ENCODE measurements at regions of chr3 and their contacts with region 1.

Region 1: DNA sequence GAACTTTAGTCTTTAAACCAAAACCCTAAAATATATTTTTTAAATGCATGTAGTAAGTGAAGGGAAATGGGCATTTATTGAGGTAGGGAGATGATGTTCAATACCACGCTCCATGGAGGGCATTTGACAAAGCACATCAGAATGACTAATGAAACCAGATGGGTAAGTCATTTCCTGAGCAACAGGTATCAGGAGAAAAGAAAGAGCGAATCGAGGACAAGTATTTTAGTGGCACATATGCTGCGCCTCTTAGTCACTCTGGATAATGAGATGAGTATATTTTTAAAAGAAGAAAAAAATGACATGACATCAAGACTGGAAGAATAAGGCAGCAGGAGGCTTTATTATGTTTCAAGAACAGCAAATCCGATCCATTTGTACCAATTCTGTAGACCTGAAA is 129.0 kb upstream of the ARHGEF3 start:
- DNase-seq: no peak
- H3K4me3 Mint-ChIP-seq: no peak overlapping the region
- H3K27ac Mint-ChIP-seq: peak overlapping the region; percentile 70
- H3K4me1 Mint-ChIP-seq: peaks cover 40% of the 10 kb centered on the region
- H3K27me3 Mint-ChIP-seq: no peaks in the 10 kb centered on the region

Region 2: DNA sequence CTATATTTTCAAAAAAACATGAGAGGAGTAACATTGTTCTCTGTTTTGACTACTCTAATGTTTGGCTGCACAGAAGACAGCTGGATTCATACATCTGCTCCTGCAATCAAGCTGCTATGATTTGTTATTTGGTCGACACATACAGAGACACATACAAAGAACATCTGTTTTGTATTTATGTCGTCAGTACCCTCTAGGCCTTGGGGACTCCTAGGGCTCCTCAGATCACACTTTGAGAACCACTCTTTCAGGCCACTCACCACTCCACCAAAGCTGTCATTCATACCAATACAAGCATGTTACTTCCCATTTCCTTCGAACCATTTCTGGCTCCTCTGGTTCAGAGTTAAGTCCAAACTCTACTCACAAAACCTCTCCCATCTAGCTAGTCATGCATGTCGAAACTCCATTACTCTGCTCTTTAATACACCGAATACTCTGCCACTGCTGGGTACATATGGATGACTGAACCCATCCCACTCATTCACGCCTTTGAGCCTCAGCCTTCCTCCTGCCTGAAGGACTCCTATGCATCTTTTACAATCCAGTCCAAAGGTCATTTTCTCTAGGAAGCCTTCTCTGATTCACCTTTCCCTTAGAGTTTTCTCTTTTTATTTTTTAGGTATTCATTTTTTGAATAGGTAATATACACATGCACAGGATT is 26.0 kb before region 1 on chr3:
- intact Hi-C with region 1: no loop called
- DNase-seq: no peak
- H3K4me3 Mint-ChIP-seq: no peak overlapping the region
- H3K27ac Mint-ChIP-seq: no peak overlapping the region
- H3K4me1 Mint-ChIP-seq: peaks cover 57% of the 10 kb centered on the region
- H3K27me3 Mint-ChIP-seq: no peaks in the 10 kb centered on the region

Region 3: DNA sequence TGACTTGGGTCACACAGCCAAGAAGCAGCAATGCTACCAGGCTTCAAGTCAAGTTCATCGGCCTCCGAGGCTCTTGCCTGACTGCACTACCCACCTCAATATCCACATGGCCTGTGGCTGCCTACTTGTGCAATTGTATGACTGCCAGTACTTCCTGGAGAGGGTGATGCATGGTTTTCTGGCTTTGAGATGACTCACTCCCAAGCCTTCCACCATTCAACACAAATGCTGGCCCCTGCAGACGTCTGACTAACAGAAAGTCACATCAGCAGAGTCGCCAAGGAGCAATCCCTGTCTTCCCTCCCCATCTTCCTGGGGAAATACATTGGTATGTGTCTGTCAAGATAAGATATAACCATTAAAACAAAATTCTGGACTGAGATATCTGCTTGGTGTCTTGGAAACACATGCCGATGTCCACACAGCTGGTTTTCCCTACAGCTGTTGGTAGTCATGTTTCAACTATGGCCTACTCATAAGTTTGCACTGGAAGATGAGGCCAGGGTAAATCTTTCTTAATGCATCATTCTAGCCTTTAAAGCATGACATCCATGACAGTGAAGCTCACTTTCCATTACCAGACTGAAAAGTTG is 50.2 kb after region 1 on chr3:
- intact Hi-C with region 1: loop called (anchors 2 kb)
- DNase-seq: peak; percentile 22
- H3K4me3 Mint-ChIP-seq: no peak overlapping the region
- H3K27ac Mint-ChIP-seq: peak overlapping the region; percentile 72
- H3K4me1 Mint-ChIP-seq: peaks cover 26% of the 10 kb centered on the region
- H3K27me3 Mint-ChIP-seq: no peaks in the 10 kb centered on the region